Activated B cell treated with CpG ODN at 0.5 μM for 24 hours (primary cell): ENCODE measurements at regions of chr4 and their contacts with region 1.

Region 1: DNA sequence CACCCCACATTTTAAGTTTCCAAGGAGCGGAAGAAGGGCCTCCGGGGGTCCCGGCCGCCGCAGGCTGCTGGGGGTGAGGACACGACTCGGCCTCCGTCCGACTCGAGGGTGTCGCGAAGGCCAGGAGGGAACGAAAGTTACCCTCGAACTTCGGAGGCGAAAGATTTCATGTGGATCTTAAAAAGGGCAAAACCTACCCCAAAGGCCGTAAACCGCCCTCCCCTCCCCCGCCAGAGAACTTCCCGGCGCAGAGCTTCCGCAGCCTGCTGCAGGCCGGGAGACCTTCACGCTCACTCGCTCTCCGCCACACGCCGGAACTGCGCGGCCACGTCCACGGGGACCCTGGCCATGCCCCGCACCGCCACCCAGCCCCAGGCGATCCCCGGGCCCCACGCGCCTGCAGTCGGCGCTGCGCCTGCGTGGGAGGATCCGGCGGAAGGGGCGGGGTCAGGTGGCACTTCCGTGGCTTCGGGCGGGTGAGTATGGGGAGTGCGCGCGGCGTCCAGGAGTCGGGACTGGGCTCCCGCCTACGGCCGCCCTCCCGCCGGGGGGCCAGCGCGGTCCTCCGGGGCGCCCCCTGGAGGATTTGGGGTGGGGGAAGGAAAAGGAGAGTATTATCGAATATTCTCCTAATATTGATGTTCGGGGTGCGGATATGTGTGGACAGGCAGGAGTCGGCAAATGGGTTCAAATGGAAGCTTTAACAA is at the start of gene MMAA:
- DNase-seq: peak; percentile 98
- ATAC-seq: peak; percentile 95
- H3K4me3 Mint-ChIP-seq: peak within 1 kb of the TSS; percentile 94
- H3K27ac Mint-ChIP-seq: peak within 1 kb of the TSS; percentile 92
- H3K4me1 Mint-ChIP-seq: peaks cover 24% of the 10 kb centered on the region
- H3K27me3 Mint-ChIP-seq: peaks cover under 1% of the 10 kb centered on the region
- CTCF ChIP-seq: no peak
- total RNA-seq, gene MMAA: 11.3 and 13.5 TPM in 2 replicates

Region 2: DNA sequence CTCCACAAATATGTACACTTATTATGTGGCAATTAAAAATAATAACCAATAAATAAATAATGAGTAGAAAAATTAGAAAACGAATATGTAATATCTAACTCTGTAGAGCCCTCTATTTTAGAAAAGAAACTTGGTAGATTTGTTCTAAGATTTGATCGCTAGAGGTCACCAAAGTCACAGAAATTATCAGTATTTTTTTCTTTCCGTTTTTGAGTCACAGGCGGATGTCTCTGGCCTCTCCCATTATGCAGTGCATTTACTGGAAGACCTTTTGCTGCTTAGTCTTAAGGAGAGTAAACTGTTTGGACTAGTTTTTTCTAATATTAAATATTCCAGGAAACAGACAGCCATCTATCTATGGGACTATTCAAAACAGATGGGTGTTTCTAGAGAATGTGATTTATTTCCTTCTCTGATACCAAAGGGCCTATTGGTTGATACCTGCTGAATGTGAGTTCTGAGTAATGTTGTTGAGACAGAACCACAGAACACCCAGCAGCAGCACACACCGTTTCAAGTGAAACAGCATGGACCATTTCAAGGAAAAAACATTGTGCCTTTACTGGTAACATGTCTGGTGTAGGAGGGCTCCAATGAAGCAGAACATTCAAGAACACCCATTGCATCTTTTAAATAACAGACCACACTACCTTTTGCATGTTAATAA is 1444.6 kb before region 1 on chr4:
- CTCF ChIA-PET with region 1: interaction called, 4 read pairs
- POLR2A ChIA-PET with region 1: no interaction called
- intact Hi-C with region 1: loop called (anchors 2 kb)
- DNase-seq: no peak
- ATAC-seq: peak; percentile 47
- H3K4me3 Mint-ChIP-seq: no peak overlapping the region
- H3K27ac Mint-ChIP-seq: no peak overlapping the region
- H3K4me1 Mint-ChIP-seq: peaks cover 5% of the 10 kb centered on the region
- H3K27me3 Mint-ChIP-seq: peaks cover 6% of the 10 kb centered on the region
- CTCF ChIP-seq: no peak

Region 3: DNA sequence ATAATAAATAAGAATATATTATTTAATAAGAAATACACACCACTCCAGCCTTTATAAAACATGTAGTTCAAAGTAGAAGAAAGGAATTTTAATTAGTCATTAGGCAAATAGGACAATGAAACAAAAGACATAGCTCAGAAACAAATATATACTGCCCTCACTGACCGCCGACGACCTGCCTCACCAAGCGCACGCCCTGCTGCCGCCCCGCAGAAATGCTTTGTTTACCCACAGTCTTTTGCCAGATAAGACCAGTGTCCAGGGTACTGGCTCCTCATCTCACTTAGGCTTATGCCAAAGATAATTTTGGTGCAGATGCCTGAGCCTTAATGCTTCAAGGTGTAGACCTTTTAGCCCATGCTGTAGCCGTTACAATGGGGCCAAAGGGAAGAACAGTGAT is 773.7 kb before region 1 on chr4:
- CTCF ChIA-PET with region 1: no interaction called
- POLR2A ChIA-PET with region 1: no interaction called
- intact Hi-C with region 1: no loop called
- DNase-seq: no peak
- ATAC-seq: no peak
- H3K4me3 Mint-ChIP-seq: no peak overlapping the region
- H3K27ac Mint-ChIP-seq: no peak overlapping the region
- H3K4me1 Mint-ChIP-seq: no peaks in the 10 kb centered on the region
- H3K27me3 Mint-ChIP-seq: no peaks in the 10 kb centered on the region
- CTCF ChIP-seq: no peak

Region 4: GRCh38 chr4:145180298-145181090 is 438.6 kb before region 1 on chr4 and contains the start of gene OTUD4:
- CTCF ChIA-PET with region 1: interaction called, 12 read pairs
- POLR2A ChIA-PET with region 1: interaction called, 15 read pairs
- intact Hi-C with region 1: loop called (anchors 1 kb)
- DNase-seq: peak; percentile 91
- ATAC-seq: peak; percentile 81
- H3K4me3 Mint-ChIP-seq: peak within 1 kb of the TSS; percentile 89
- H3K27ac Mint-ChIP-seq: peak within 1 kb of the TSS; percentile 93
- H3K4me1 Mint-ChIP-seq: peaks cover 30% of the 10 kb centered on the region
- H3K27me3 Mint-ChIP-seq: no peaks in the 10 kb centered on the region
- CTCF ChIP-seq: no peak
- total RNA-seq, gene OTUD4: 45.2 and 47.3 TPM in 2 replicates

Region 5: GRCh38 chr4:145473203-145473602 is 145.9 kb before region 1 on chr4:
- CTCF ChIA-PET with region 1: no interaction called
- POLR2A ChIA-PET with region 1: no interaction called
- intact Hi-C with region 1: no loop called
- DNase-seq: no peak
- ATAC-seq: no peak
- H3K4me3 Mint-ChIP-seq: no peak overlapping the region
- H3K27ac Mint-ChIP-seq: no peak overlapping the region
- H3K4me1 Mint-ChIP-seq: no peaks in the 10 kb centered on the region
- H3K27me3 Mint-ChIP-seq: peaks cover 11% of the 10 kb centered on the region
- CTCF ChIP-seq: no peak

Region 6: DNA sequence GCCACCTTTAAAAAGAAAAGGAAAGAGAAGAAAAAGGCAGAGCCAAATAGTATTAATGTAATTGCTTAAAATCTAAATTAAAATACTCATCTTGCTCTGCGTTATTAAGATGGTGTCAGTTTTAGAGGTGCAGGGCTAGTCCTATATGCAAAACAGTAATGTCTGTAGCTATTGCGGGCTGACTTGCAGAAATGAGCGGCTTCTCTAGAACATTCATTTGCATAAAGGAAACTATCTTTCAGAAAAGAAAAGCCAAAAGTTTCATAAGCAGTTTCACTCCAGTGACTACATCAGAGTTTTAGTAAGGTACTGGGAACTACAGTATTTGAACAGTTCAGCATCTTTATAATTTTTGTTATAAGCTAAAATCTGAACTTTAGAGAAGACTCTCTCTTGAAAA is 131.5 kb before region 1 on chr4:
- CTCF ChIA-PET with region 1: no interaction called
- POLR2A ChIA-PET with region 1: no interaction called
- intact Hi-C with region 1: loop called (anchors 2 kb)
- DNase-seq: no peak
- ATAC-seq: peak; percentile 81
- H3K4me3 Mint-ChIP-seq: no peak overlapping the region
- H3K27ac Mint-ChIP-seq: no peak overlapping the region
- H3K4me1 Mint-ChIP-seq: peaks cover 9% of the 10 kb centered on the region
- H3K27me3 Mint-ChIP-seq: peaks cover 32% of the 10 kb centered on the region
- CTCF ChIP-seq: no peak

Region 7: GRCh38 chr4:146029939-146030710 is 411.0 kb after region 1 on chr4:
- CTCF ChIA-PET with region 1: no interaction called
- POLR2A ChIA-PET with region 1: no interaction called
- intact Hi-C with region 1: loop called (anchors 5 kb)
- DNase-seq: peak; percentile 35
- ATAC-seq: peak; percentile 97
- H3K4me3 Mint-ChIP-seq: peak overlapping the region; percentile 63
- H3K27ac Mint-ChIP-seq: peak overlapping the region; percentile 86
- H3K4me1 Mint-ChIP-seq: peaks cover 51% of the 10 kb centered on the region
- H3K27me3 Mint-ChIP-seq: no peaks in the 10 kb centered on the region
- CTCF ChIP-seq: no peak

Region 8: GRCh38 chr4:146916479-146917076 is 1297.5 kb after region 1 on chr4:
- CTCF ChIA-PET with region 1: no interaction called
- POLR2A ChIA-PET with region 1: no interaction called
- intact Hi-C with region 1: loop called (anchors 10 kb)
- DNase-seq: no peak
- ATAC-seq: no peak
- H3K4me3 Mint-ChIP-seq: no peak overlapping the region
- H3K27ac Mint-ChIP-seq: no peak overlapping the region
- H3K4me1 Mint-ChIP-seq: no peaks in the 10 kb centered on the region
- H3K27me3 Mint-ChIP-seq: peaks cover 8% of the 10 kb centered on the region
- CTCF ChIP-seq: no peak

Region 9: GRCh38 chr4:147617173-147617840 is 1998.2 kb after region 1 on chr4 and contains the start of gene TMEM184C:
- CTCF ChIA-PET with region 1: no interaction called
- POLR2A ChIA-PET with region 1: interaction called, 3 read pairs
- intact Hi-C with region 1: loop called (anchors 5 kb)
- DNase-seq: peak; percentile 97
- ATAC-seq: peak; percentile 97
- H3K4me3 Mint-ChIP-seq: peak within 1 kb of the TSS; percentile 98
- H3K27ac Mint-ChIP-seq: peak within 1 kb of the TSS; percentile 96
- H3K4me1 Mint-ChIP-seq: peaks cover 44% of the 10 kb centered on the region
- H3K27me3 Mint-ChIP-seq: peaks cover 2% of the 10 kb centered on the region
- CTCF ChIP-seq: no peak
- total RNA-seq, gene TMEM184C: 25.0 and 27.9 TPM in 2 replicates